ENCODE measurements at regions of chr3 and their contacts with region 1.

Region 1: DNA sequence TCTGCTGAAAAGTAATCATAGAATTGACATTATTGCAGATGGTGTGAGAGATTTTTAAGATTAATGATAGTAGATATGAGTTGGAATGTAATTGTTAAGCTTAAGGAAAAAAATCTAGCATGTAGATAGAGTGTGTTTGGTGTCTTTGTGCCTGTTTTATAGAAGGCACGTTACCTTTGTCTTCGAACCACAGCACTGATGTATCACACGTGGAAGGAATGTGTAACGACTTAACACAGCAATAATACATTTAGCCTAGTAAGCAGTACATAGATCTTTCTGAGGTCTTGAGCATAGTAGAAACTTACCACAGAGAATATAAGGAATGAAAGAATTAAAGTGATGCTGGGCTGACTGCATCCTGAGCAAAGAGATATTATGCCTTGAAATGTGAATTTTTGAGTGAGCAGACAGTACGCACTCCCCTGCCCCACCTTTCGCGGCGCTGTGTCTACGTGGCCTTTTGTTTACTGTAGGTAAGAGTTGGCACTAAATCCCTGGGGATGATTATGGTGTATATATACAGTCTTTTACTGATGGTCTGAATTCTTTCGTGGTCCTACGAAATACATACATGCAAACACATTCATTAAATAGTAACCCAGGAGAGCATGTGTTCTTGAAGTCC is 217.6 kb upstream of the TOPAZ1 start:
- DNase-seq: no peak
- H3K4me3 ChIP-seq: no peak overlapping the region
- H3K27ac ChIP-seq: no peak overlapping the region
- H3K27me3 ChIP-seq: peaks cover 28% of the 10 kb centered on the region
- CTCF ChIP-seq: no peak

Region 2: GRCh38 chr3:42891042-42891441 is 1133.0 kb before region 1 on chr3:
- CTCF ChIA-PET with region 1: interaction called, 10 read pairs
- POLR2A ChIA-PET with region 1: no interaction called
- DNase-seq: no peak
- H3K4me3 ChIP-seq: no peak overlapping the region
- H3K27ac ChIP-seq: no peak overlapping the region
- H3K27me3 ChIP-seq: peaks cover 12% of the 10 kb centered on the region
- CTCF ChIP-seq: no peak

Region 3: DNA sequence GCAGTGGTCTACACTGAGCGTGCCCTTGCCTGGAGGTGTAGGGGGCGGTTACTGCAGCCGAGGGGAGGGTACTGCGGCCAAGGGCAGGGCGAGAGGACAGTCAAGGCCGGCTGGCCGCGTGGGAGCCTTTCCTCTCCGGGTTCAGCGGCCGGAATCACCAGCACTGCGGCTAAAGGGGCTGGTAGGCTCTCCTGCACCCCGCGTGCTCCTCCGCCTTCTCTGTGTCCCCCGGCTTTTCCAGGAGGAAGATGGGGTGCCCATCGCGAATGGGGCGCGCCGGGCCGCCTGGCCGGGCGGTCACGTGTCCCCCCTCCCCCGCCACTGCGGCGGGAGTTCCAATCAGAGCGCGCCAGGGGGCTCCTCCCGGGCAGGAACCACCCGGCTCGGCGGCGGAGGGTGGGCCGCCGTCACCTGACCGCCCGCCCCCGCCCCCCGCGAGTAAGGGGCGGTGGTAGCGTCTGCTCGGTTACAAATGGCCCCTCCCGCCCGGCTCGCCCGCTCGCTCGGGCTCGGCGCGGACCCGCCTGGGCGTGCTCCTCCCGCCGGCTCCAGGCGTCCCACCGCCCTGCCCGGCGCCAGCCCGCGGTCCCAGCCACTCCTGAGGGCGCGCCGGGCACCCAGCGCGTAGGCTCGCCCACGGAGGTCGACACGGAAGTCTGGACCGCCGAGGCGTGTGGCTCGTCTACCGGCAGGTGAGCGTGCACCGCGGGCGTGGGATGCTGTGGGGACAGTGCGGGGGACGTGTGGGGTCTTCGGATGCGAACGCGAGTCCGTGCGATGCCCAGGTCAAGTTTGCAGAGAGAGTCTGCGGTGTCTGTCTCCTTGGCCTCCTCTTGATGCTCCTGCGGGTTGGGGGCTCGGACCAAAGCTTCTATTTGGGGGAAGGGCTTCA is 25.0 kb before region 1 on chr3:
- CTCF ChIA-PET with region 1: no interaction called
- POLR2A ChIA-PET with region 1: no interaction called
- DNase-seq: no peak
- H3K4me3 ChIP-seq: peak overlapping the region; percentile 58
- H3K27ac ChIP-seq: no peak overlapping the region
- H3K27me3 ChIP-seq: peaks cover 59% of the 10 kb centered on the region
- CTCF ChIP-seq: no peak

Region 4: DNA sequence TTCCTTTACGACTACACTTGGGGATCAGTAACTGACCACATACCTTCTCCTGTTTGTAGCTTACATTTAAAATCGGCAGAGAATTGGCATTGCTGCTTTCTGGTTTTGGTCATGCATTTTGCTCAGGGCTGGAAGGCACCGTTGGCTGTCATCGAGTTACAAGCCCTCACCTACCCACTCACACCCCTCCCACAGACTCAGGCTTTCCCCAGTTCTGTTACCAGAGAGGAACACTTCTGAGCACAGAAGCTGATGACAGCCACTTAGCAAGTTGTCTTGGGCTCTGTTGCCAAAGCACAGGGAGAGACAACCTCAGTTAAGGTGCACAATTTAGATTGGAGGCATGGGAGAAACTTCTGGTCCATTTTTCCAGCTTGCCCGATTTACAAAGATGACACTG is 12.8 kb after region 1 on chr3:
- CTCF ChIA-PET with region 1: no interaction called
- POLR2A ChIA-PET with region 1: no interaction called
- DNase-seq: no peak
- H3K4me3 ChIP-seq: no peak overlapping the region
- H3K27ac ChIP-seq: no peak overlapping the region
- H3K27me3 ChIP-seq: no peaks in the 10 kb centered on the region
- CTCF ChIP-seq: no peak

Measured in AG04450 (cell line).